ENCODE measurements at regions of chr12 and their contacts with region 1.

Region 1: DNA sequence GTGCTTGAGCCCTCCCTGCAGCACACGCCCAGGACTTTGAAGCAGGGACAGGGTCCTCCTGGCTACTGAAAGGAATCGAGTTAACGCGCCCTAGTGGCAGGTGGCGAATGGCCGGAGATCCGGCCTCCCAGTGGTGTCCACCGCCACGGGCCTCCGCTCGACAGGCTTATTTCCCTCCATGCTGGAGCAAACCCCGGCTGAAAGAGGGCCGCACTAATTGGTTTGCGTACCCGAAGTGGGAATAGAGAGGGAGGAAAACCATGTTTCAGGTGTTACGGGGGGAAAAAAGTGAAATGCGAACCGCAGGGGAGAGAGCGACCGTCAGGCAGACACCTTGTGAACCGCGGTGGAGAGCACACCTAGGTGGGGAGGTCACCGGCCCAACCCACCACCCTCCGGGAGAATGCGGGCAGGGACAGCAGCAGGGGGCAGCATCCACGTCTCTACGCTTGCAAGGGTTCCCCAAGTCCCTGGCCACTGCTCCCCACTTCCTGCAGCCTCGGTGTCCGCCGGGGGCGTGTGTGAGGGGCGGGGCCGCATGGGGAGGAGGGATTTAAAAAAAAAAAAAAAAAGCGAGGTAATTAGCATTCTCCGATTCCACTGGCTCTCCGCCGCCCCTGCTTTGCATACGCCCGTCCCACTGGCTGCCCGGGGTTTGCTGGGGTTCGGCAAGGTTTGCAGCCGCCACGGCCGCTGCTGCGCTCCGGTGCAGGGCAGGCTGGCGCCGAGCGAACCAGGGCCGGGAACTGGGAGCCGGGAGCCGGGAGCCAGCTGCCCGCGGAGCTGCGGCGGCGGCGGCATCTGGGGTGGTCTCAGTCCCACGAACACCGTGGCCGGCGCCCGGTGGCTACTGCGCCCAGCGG is 224.6 kb upstream of the CRY1 start:
- DNase-seq: peak; percentile 94
- ATAC-seq: peak; percentile 62
- H3K4me3 Mint-ChIP-seq: peak overlapping the region; percentile 90
- H3K27ac Mint-ChIP-seq: no peak overlapping the region
- H3K4me1 Mint-ChIP-seq: peaks cover 33% of the 10 kb centered on the region
- H3K27me3 Mint-ChIP-seq: peaks cover 12% of the 10 kb centered on the region
- CTCF ChIP-seq: peak; percentile 61

Region 2: DNA sequence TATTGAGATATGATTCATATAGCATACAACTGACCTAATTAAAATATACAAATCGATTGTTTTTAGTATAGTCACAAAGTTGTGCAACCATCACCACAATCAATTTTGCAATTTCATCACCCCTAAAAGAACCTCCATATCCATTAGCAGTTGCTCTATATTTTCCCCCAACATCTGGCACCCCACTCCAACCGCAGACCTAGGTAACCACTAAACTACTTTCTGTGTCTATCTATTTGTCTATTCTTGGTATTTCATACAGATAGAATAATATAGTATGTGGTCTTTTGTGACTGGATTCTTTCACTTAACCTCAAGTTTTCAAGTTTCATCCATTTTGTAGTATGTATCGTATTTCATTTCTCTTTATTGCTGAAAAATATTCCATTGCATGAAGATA is 98.7 kb before region 1 on chr12:
- CTCF ChIA-PET with region 1: no interaction called
- POLR2A ChIA-PET with region 1: no interaction called
- intact Hi-C with region 1: no loop called
- DNase-seq: no peak
- ATAC-seq: no peak
- H3K4me3 Mint-ChIP-seq: no peak overlapping the region
- H3K27ac Mint-ChIP-seq: no peak overlapping the region
- H3K4me1 Mint-ChIP-seq: peaks cover 4% of the 10 kb centered on the region
- H3K27me3 Mint-ChIP-seq: peaks cover 11% of the 10 kb centered on the region
- CTCF ChIP-seq: no peak

Region 3: DNA sequence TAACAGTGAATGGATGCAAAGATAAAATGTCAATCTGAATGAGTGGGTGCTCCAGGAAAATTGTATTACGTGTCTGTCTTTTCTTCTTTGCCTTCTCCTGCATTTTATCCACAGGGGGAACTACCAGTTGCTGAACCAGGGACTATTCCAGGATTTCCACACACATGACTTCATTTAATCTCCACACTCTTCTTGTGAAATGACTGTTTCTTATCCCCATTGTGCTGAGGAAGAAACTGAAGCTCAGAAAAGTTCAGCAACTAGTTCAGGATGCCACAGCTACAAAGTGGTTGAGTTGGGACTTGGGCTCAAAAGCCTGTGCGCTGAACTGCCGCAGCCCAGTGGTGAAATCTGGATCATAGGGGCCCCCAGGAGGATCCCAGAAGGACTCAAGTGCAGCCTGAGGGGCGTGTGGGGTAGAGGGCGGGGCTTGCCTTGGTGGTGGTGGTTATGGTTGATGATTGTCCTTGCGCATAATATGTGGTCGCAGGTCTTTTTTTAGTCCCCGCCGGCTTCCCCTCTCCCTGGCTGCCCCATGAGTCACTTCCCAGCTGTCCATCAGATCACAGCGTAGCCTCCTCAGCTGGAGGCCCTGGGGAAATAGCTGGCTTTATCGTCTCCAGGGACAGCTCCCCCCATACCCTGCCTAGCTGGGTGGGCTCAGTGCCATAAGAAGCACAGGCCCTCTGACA is 10.6 kb after region 1 on chr12:
- CTCF ChIA-PET with region 1: interaction called, 18 read pairs
- POLR2A ChIA-PET with region 1: interaction called, 46 read pairs
- intact Hi-C with region 1: no loop called
- DNase-seq: peak; percentile 73
- ATAC-seq: peak; percentile 47
- H3K4me3 Mint-ChIP-seq: no peak overlapping the region
- H3K27ac Mint-ChIP-seq: peak overlapping the region; percentile 89
- H3K4me1 Mint-ChIP-seq: peaks cover 86% of the 10 kb centered on the region
- H3K27me3 Mint-ChIP-seq: no peaks in the 10 kb centered on the region
- CTCF ChIP-seq: no peak

Region 4: GRCh38 chr12:107356266-107356936 is 38.4 kb after region 1 on chr12:
- CTCF ChIA-PET with region 1: interaction called, 4 read pairs
- POLR2A ChIA-PET with region 1: interaction called, 46 read pairs
- intact Hi-C with region 1: no loop called
- DNase-seq: no peak
- ATAC-seq: peak; percentile 43
- H3K4me3 Mint-ChIP-seq: no peak overlapping the region
- H3K27ac Mint-ChIP-seq: no peak overlapping the region
- H3K4me1 Mint-ChIP-seq: peaks cover 67% of the 10 kb centered on the region
- H3K27me3 Mint-ChIP-seq: no peaks in the 10 kb centered on the region
- CTCF ChIP-seq: no peak

Region 5: DNA sequence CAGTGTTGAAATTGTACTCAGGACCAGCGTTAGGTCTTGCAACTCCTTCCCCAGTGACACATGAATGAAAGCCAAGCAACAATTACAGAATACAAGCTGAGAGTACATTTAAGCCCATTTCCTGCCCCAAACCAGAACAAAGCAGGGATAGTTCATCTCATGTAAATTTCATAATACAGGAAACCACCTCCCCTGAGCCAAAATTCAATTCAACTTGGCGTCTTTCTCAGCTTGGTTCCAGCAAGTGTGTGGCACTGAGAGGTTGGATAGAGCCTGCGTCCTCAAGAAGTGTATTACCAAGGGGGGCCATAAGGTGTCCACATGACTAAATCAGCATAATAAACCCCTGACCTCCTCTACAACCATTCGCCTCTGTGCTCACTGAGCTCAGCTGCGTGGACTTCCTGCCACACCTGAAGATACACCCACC is 54.3 kb after region 1 on chr12:
- CTCF ChIA-PET with region 1: interaction called, 16 read pairs
- POLR2A ChIA-PET with region 1: interaction called, 44 read pairs
- intact Hi-C with region 1: loop called (anchors 5 kb)
- DNase-seq: peak; percentile 64
- ATAC-seq: peak; percentile 64
- H3K4me3 Mint-ChIP-seq: peak overlapping the region; percentile 24
- H3K27ac Mint-ChIP-seq: peak overlapping the region; percentile 98
- H3K4me1 Mint-ChIP-seq: peaks cover 73% of the 10 kb centered on the region
- H3K27me3 Mint-ChIP-seq: no peaks in the 10 kb centered on the region
- CTCF ChIP-seq: no peak

Region 6: DNA sequence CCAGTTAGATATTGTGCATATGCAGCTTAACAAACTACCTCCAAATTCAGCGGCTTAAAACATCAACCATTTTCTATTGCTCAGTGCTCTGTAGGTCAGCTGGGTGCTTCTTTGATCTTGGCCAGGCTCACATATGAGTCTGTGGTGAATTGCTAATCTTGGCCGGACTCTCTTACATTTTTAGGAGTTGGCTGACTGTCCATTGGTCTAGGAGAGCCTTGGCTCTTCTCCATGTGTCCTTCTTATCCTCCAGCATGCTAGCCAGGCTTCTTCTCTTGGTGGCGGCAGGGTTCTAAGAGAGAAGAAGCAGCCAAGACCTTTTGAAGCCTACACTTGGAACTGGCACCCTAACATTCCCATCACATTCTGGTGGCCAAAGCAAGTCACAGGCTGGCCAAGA is 193.3 kb after region 1 on chr12:
- CTCF ChIA-PET with region 1: no interaction called
- POLR2A ChIA-PET with region 1: no interaction called
- intact Hi-C with region 1: no loop called
- DNase-seq: no peak
- ATAC-seq: no peak
- H3K4me3 Mint-ChIP-seq: no peak overlapping the region
- H3K27ac Mint-ChIP-seq: no peak overlapping the region
- H3K4me1 Mint-ChIP-seq: peaks cover 15% of the 10 kb centered on the region
- H3K27me3 Mint-ChIP-seq: no peaks in the 10 kb centered on the region
- CTCF ChIP-seq: no peak

Measured in activated CD8-positive, alpha-beta T cell treated with anti-CD3 and anti-CD28 coated beads for 36 hours (primary cell).